SK-N-SH (cell line): ENCODE measurements at regions of chr3 and their contacts with region 1.

Region 1: DNA sequence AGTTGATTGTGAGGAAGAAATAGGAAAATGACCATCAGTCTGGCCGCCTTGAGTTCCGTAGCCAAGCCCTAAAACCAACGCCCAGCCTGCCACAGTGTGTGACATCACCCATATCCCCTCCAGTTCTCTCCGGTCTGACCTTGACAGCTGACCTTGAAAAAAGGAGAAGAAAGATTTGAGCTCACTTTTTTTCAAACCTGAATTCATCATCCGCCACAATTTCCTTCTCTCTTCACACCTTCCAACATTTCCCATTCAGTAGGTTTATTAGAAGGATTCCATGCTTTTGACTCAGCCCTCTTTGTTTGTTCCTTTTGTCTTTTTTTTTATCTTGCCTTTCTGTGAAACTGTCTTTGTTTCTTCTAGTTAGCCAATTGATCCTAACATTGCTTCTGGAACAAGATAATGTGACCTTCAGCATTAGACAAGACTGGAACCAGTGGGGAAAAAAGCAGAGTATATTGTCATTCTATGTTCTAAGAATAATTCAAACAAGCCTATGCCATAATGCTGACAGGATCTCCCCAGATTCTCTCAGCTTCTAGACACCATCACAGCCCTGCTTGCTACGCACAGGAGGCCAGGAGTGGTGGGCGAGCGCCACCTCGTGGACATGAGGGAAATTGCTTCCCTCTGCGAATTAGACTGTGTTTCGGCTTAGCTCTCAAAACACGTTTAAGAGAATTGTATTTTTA is 283.1 kb downstream of the FGF12 start:
- DNase-seq: peak; percentile 53
- H3K4me3 ChIP-seq: peak overlapping the region in 1 of 2 experiments; percentile 23; a peak in 1 of 4 replicates
- H3K27ac ChIP-seq: no peak overlapping the region
- H3K4me1 ChIP-seq: no peaks in the 10 kb centered on the region
- H3K27me3 ChIP-seq: peaks cover 13% of the 10 kb centered on the region; the same call in 1 of the 2 replicates
- CTCF ChIP-seq: peak; percentile 98
- EP300 ChIP-seq: no peak
- RAD21 ChIP-seq: peak; percentile 94

Region 2: DNA sequence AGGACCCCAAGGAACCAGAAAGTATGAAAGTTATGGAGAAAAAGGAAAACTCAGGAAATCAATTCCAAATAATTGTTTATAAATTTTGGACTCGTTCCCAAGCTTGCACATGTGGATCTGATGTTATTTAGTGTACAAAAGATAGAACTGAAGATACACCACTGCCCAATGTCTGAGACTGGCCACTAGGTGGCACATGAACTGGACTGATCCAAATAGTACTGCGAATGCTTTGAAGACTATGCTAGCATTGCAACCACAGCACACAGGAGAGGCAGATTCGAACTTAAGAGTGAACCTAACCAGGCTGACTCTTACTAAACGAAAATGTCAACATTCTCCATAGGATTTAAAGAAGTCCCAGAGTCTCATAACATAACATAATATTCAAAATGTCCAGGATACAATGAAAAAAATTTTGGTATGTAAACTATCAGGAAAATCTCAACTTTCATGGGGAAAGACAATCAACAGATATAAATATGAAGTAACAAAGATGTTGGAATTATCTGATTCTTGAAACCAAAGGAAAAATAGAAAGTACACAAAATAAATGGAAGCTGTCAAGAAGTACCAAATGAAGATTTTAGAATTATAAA is 313.6 kb before region 1 on chr3:
- CTCF ChIA-PET with region 1: interaction called, 20 read pairs
- POLR2A ChIA-PET with region 1: no interaction called
- DNase-seq: peak; percentile 24
- H3K4me3 ChIP-seq: no peak overlapping the region
- H3K27ac ChIP-seq: no peak overlapping the region
- H3K4me1 ChIP-seq: no peaks in the 10 kb centered on the region; a peak in 1 of 4 replicates
- H3K27me3 ChIP-seq: no peaks in the 10 kb centered on the region
- CTCF ChIP-seq: peak; percentile 89
- EP300 ChIP-seq: no peak
- RAD21 ChIP-seq: peak; percentile 45

Region 3: DNA sequence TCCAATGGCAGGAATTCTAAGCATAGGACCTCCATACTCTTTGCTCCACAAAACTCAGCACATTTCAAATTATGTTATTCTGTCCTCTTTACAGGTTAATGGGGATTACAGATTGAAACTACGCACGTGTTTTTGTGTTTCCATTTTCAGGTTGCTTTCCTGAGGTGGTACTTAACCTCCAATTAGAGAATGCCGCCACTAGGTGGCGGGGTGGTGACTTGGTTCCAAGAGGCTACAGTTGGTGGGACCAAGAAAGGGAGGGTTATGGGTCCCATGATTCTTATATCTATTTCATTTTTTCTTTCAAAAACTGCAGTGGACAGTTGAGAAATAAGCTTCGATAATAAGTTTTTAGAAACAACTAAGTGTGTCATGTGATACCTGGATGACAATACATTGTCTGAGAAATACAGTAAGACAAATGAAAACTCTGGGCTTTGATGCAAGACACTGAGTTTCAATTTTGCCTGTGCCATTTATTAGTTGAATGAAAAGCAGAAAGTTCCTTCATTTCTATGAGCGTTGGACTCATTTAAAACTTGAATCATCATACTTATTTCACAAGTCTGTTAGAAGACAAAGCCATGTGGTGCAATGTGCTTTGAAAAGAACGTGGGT is 255.9 kb before region 1 on chr3:
- CTCF ChIA-PET with region 1: interaction called, 54 read pairs
- POLR2A ChIA-PET with region 1: no interaction called
- DNase-seq: peak; percentile 47
- H3K4me3 ChIP-seq: peak overlapping the region in 1 of 2 experiments; percentile 26; a peak in 1 of 4 replicates
- H3K27ac ChIP-seq: no peak overlapping the region
- H3K4me1 ChIP-seq: no peaks in the 10 kb centered on the region
- H3K27me3 ChIP-seq: no peaks in the 10 kb centered on the region; the same call in 1 of the 2 replicates
- CTCF ChIP-seq: peak; percentile 70
- EP300 ChIP-seq: no peak
- RAD21 ChIP-seq: peak; percentile 55

Region 4: GRCh38 chr3:192194085-192194484 is 250.2 kb before region 1 on chr3:
- CTCF ChIA-PET with region 1: interaction called, 54 read pairs
- POLR2A ChIA-PET with region 1: no interaction called
- DNase-seq: no peak
- H3K4me3 ChIP-seq: no peak overlapping the region
- H3K27ac ChIP-seq: no peak overlapping the region
- H3K4me1 ChIP-seq: no peaks in the 10 kb centered on the region
- H3K27me3 ChIP-seq: no peaks in the 10 kb centered on the region; the same call in 1 of the 2 replicates
- CTCF ChIP-seq: no peak
- EP300 ChIP-seq: no peak
- RAD21 ChIP-seq: no peak

Region 5: DNA sequence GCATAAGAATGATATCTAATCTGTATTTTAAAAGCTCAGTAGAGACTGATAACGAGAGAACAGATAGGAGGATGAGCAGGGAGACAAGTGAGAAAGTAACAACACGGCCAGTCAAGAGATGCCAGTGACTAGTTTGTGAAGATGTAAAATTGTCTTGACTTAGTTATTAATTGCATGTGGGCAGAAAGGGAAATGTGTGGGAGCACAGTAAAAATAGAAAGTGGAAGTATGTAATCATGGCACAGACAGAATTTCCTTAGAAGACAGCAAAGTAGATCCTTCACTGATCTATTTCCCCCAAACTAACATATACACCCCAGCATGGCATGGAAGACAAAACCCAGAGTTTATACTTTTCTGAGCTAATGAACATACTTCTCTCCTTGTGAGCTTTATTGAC is 61.4 kb before region 1 on chr3:
- CTCF ChIA-PET with region 1: no interaction called
- POLR2A ChIA-PET with region 1: no interaction called
- DNase-seq: no peak
- H3K4me3 ChIP-seq: no peak overlapping the region
- H3K27ac ChIP-seq: no peak overlapping the region
- H3K4me1 ChIP-seq: no peaks in the 10 kb centered on the region
- H3K27me3 ChIP-seq: no peaks in the 10 kb centered on the region
- CTCF ChIP-seq: no peak
- EP300 ChIP-seq: no peak
- RAD21 ChIP-seq: no peak

Region 6: DNA sequence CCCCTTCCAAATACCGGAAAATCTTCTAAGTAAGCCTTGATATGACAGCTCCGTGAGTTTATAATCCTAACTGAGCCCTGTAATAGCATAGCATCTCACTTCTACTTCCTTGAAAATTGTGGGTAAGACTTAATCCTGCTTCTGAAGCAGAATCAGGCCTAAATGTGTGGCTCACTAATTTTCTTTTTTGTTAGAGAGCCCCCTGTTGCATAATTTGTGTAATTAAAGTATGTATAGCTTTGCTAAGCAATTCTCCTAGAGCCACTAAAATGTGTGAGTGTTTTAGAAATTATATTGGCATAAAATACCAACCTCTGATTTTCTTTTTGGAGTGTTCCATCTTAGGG is 21.3 kb before region 1 on chr3:
- CTCF ChIA-PET with region 1: interaction called, 16 read pairs
- POLR2A ChIA-PET with region 1: no interaction called
- DNase-seq: no peak
- H3K4me3 ChIP-seq: no peak overlapping the region
- H3K27ac ChIP-seq: no peak overlapping the region
- H3K4me1 ChIP-seq: no peaks in the 10 kb centered on the region
- H3K27me3 ChIP-seq: no peaks in the 10 kb centered on the region
- CTCF ChIP-seq: peak; percentile 30
- EP300 ChIP-seq: no peak
- RAD21 ChIP-seq: no peak

Region 7: DNA sequence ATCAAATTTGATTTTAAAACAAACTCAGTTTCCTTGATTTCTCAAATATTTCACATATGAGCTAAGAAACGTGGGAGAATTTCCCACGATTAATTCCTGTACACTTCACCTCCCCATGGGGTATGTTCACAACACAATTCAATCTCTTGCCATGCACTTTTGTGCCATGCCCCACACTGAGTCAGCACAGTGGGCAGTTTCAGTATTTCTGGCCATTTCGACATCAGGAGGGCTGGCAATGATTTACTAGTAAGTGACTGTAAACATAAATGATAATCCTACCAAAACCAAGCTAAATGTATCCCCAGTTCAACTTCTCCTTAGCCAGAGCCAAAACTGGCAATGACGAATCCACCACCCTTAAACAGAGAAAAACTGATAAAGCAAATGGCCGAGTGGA is 10.5 kb before region 1 on chr3:
- CTCF ChIA-PET with region 1: interaction called, 55 read pairs
- POLR2A ChIA-PET with region 1: no interaction called
- DNase-seq: no peak
- H3K4me3 ChIP-seq: no peak overlapping the region
- H3K27ac ChIP-seq: no peak overlapping the region
- H3K4me1 ChIP-seq: no peaks in the 10 kb centered on the region
- H3K27me3 ChIP-seq: peaks cover 10% of the 10 kb centered on the region; the same call in 1 of the 2 replicates
- CTCF ChIP-seq: no peak
- EP300 ChIP-seq: no peak
- RAD21 ChIP-seq: no peak

Region 8: GRCh38 chr3:192467230-192468140 is 23.2 kb after region 1 on chr3:
- CTCF ChIA-PET with region 1: interaction called, 15 read pairs
- POLR2A ChIA-PET with region 1: no interaction called
- DNase-seq: peak; percentile 23
- H3K4me3 ChIP-seq: peak overlapping the region in 1 of 2 experiments; percentile 29; a peak in 1 of 4 replicates
- H3K27ac ChIP-seq: no peak overlapping the region
- H3K4me1 ChIP-seq: no peaks in the 10 kb centered on the region
- H3K27me3 ChIP-seq: peaks cover 22% of the 10 kb centered on the region; the same call in 1 of the 2 replicates
- CTCF ChIP-seq: peak; percentile 93
- EP300 ChIP-seq: no peak
- RAD21 ChIP-seq: peak; percentile 79

Region 9: DNA sequence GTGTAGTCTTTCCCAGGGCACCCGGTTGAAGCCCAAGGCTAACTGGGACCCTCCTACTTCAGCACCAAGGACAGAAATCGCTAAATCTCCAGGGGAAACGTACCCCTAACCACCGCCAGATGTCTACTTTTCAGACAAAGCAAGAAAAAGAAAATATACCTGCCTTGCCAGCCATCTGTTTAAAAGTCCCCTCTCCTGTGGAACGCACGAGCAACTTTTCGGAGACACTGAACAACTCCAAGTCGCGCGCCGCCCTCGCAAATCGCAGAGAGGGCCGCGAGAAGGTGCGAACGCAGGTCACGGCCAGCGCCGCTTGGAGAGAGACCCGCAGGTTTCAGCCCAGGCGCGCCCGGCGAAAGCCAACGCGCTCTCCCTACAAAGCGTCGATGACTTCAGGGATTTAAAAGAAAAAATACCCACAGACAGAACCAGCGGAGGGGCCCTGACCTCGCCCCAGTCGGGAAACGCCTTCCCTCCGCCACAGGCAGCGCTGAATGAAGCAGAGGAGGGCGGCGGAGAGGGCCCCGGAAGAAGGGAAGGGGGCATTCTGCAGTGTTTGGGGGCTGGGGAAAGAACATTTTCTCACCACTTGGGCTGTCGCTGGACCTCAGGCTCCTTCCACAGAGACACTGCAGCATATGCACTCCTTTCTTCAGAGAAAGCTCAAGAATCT is 70.0 kb after region 1 on chr3:
- CTCF ChIA-PET with region 1: no interaction called
- POLR2A ChIA-PET with region 1: no interaction called
- DNase-seq: peak; percentile 12
- H3K4me3 ChIP-seq: peak overlapping the region; percentile 12; a peak in 1 of 4 replicates
- H3K27ac ChIP-seq: no peak overlapping the region
- H3K4me1 ChIP-seq: no peaks in the 10 kb centered on the region
- H3K27me3 ChIP-seq: peaks cover 28% of the 10 kb centered on the region
- CTCF ChIP-seq: no peak; the same call in 1 of the 2 replicates
- EP300 ChIP-seq: no peak
- RAD21 ChIP-seq: no peak

Region 10: GRCh38 chr3:192608726-192609600 is 164.7 kb after region 1 on chr3:
- CTCF ChIA-PET with region 1: no interaction called
- POLR2A ChIA-PET with region 1: no interaction called
- DNase-seq: no peak
- H3K4me3 ChIP-seq: no peak overlapping the region
- H3K27ac ChIP-seq: no peak overlapping the region
- H3K4me1 ChIP-seq: no peaks in the 10 kb centered on the region
- H3K27me3 ChIP-seq: no peaks in the 10 kb centered on the region
- CTCF ChIP-seq: no peak
- EP300 ChIP-seq: no peak
- RAD21 ChIP-seq: no peak